Endothelial cell of umbilical vein (primary cell): ENCODE measurements at regions of chrX and their contacts with region 1.

Region 1: DNA sequence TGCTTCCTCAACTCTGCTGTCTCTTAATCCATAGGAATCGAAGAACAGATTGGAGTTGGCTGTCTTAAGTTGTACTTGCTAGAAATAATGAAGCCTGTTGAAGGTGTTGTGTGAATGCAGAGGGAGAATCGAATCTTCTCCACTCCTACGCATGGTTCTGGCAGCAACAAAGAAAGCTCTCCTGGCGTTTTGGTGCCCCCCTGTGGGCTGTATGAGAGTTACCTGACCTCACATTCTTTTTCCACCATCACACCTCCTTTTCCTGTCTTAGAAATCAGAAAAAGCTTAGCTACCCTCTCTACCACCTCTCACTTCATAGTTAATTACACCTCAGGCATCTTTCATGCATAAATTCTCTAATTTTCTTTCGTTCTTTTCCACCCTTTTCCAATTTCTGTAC is 16.3 kb downstream of the KLF8 start:
- DNase-seq: peak; percentile 47
- H3K4me3 ChIP-seq: no peak overlapping the region
- H3K27ac ChIP-seq: no peak overlapping the region
- H3K4me1 ChIP-seq: no peaks in the 10 kb centered on the region
- H3K27me3 ChIP-seq: no peaks in the 10 kb centered on the region
- CTCF ChIP-seq: peak; percentile 49 to 51
- POLR2A ChIP-seq: no peak

Region 2: DNA sequence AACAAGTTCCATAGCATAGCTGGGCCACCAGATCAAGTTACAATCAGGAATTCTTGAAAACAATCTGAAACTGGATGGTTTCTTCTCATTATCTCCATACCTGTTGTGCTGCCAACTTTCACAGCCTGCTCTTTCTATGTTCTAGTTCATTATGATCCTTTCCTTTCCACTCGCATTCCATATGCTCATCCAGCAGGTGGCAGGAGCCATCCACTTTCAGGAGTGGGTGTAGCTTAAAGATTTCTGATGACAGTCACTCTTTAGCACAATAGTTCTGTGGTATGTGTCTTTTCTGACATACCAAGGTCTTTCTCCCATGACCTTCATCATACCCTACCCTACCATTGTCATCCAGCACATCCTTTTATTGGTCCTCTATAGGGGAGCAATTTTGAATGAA is 1113.3 kb before region 1 on chrX:
- CTCF ChIA-PET with region 1: interaction called, 55 read pairs
- POLR2A ChIA-PET with region 1: no interaction called
- dilution Hi-C with region 1: no loop called
- intact Hi-C with region 1: no loop called
- DNase-seq: peak; percentile 59
- H3K4me3 ChIP-seq: no peak overlapping the region
- H3K27ac ChIP-seq: no peak overlapping the region
- H3K4me1 ChIP-seq: no peaks in the 10 kb centered on the region
- H3K27me3 ChIP-seq: no peaks in the 10 kb centered on the region
- CTCF ChIP-seq: peak; percentile 35 to 37
- POLR2A ChIP-seq: no peak

Region 3: GRCh38 chrX:55342533-55343501 is 905.7 kb before region 1 on chrX:
- CTCF ChIA-PET with region 1: interaction called, 8 read pairs
- POLR2A ChIA-PET with region 1: no interaction called
- dilution Hi-C with region 1: no loop called
- intact Hi-C with region 1: loop called (anchors 10 kb)
- DNase-seq: peak; percentile 41
- H3K4me3 ChIP-seq: no peak overlapping the region
- H3K27ac ChIP-seq: no peak overlapping the region
- H3K4me1 ChIP-seq: no peaks in the 10 kb centered on the region
- H3K27me3 ChIP-seq: no peaks in the 10 kb centered on the region
- CTCF ChIP-seq: peak; percentile 35 to 59
- POLR2A ChIP-seq: no peak

Region 4: DNA sequence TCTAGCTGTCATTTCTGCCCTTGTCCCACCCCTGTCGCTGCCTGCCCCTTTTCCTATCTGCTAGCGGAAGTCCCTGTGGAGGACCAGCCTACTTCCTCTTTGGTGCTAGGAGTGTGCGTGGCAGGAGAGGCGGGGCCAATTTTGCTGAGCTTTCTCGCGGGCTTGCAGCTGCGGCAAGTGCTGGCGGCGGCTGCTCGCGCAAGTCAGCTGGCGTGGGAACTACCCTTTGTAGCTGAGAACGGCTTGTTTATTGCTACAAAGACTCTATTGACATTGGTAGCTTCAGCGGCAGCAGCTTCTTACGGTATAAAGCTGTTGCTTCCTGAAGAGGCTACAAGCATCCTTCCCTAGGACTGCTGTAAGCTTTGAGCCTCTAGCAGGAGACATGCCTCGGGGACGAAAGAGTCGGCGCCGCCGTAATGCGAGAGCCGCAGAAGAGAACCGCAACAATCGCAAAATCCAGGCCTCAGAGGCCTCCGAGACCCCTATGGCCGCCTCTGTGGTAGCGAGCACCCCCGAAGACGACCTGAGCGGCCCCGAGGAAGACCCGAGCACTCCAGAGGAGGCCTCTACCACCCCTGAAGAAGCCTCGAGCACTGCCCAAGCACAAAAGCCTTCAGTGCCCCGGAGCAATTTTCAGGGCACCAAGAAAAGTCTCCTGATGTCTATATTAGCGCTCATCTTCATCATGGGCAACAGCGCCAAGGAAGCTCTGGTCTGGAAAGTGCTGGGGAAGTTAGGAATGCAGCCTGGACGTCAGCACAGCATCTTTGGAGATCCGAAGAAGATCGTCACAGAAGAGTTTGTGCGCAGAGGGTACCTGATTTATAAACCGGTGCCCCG is 796.3 kb before region 1 on chrX and contains the start of gene MAGEH1:
- CTCF ChIA-PET with region 1: interaction called, 13 read pairs
- POLR2A ChIA-PET with region 1: no interaction called
- dilution Hi-C with region 1: no loop called
- intact Hi-C with region 1: no loop called
- DNase-seq: peak; percentile 81
- H3K4me3 ChIP-seq: peak within 1 kb of the TSS; percentile 56 to 70 (median 61)
- H3K27ac ChIP-seq: peak within 1 kb of the TSS; percentile 52
- H3K4me1 ChIP-seq: peaks cover 5% of the 10 kb centered on the region
- H3K27me3 ChIP-seq: no peaks in the 10 kb centered on the region
- CTCF ChIP-seq: no peak
- POLR2A ChIP-seq: peak; percentile 42
- total RNA-seq, gene MAGEH1: 15.1 and 15.8 TPM in 2 replicates

Region 5: GRCh38 chrX:55907968-55908607 is 340.4 kb before region 1 on chrX:
- CTCF ChIA-PET with region 1: no interaction called
- POLR2A ChIA-PET with region 1: no interaction called
- dilution Hi-C with region 1: no loop called
- intact Hi-C with region 1: loop called (anchors 5 kb)
- DNase-seq: peak; percentile 6
- H3K4me3 ChIP-seq: peak overlapping the region; percentile 70 to 90 (median 86)
- H3K27ac ChIP-seq: peak overlapping the region; percentile 17
- H3K4me1 ChIP-seq: no peaks in the 10 kb centered on the region
- H3K27me3 ChIP-seq: no peaks in the 10 kb centered on the region
- CTCF ChIP-seq: peak; percentile 23 to 27
- POLR2A ChIP-seq: no peak

Region 6: GRCh38 chrX:56729152-56729850 is 480.8 kb after region 1 on chrX and contains the start of gene NBDY:
- CTCF ChIA-PET with region 1: interaction called, 17 read pairs
- POLR2A ChIA-PET with region 1: no interaction called
- dilution Hi-C with region 1: no loop called
- intact Hi-C with region 1: no loop called
- DNase-seq: peak; percentile 58
- H3K4me3 ChIP-seq: peak within 1 kb of the TSS; percentile 43 to 94 (median 92)
- H3K27ac ChIP-seq: peak within 1 kb of the TSS; percentile 91
- H3K4me1 ChIP-seq: peaks cover 4% of the 10 kb centered on the region
- H3K27me3 ChIP-seq: no peaks in the 10 kb centered on the region
- CTCF ChIP-seq: no peak
- POLR2A ChIP-seq: peak; percentile 60
- total RNA-seq, gene NBDY: 57.3 and 62.2 TPM in 2 replicates